GM12878 (cell line): ENCODE measurements at regions of chr15 and their contacts with region 1.

Region 1: DNA sequence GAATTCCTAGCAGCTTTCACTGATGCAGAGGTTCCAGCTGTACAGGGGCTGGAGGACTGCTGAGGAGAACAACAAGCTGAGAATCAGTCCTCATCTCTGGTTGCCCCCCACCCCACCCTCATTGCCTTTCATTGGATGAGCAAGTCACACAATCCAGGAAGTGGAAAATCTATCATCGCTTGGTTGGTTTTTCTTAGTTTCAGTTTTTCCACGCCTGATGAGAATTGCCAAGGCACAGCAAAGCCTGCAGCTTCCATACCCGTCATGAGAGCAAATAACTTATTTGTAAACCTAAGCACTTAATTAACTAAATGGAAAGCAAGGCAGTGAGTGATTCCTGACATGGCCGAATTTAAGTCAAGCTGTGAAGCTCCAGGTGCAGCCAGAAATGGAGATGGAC is 21.4 kb upstream of the LIPC start:
- DNase-seq: peak; percentile 27
- ATAC-seq: peak; percentile 80
- H3K4me3 ChIP-seq: peak overlapping the region; percentile 33; the same call in 1 of the 2 replicates
- H3K27ac ChIP-seq: peak overlapping the region; percentile 30
- H3K4me1 ChIP-seq: peaks cover 6% of the 10 kb centered on the region
- H3K27me3 ChIP-seq: no peaks in the 10 kb centered on the region
- CTCF ChIP-seq: no peak
- EP300 ChIP-seq: no peak
- POLR2A ChIP-seq: no peak
- RAD21 ChIP-seq: no peak

Region 2: DNA sequence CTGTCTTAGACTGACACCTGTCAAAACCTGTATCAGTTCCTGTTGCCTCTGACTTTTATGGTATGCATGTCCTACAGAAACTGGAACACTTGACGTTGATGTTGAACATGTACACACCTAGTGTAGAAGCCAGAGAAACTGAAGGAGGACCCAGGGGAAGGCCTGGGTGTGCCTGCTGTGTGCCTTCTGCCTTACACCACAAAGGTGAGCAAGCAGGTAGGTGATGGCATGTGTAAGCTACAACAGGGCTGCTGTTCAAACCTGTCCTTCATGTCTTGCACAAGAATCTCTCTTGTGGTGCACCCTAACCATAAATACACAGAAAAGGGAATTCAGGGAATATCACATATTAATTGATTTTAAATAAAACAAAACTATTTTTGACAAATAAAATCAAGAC is 285.8 kb before region 1 on chr15:
- CTCF ChIA-PET with region 1: no interaction called
- POLR2A ChIA-PET with region 1: no interaction called
- RAD21 ChIA-PET with region 1: no interaction called
- SMC1A ChIA-PET with region 1: no interaction called
- in situ Hi-C with region 1: no loop called
- intact Hi-C with region 1: no loop called
- DNase-seq: no peak
- ATAC-seq: no peak
- H3K4me3 ChIP-seq: no peak overlapping the region
- H3K27ac ChIP-seq: no peak overlapping the region
- H3K4me1 ChIP-seq: no peaks in the 10 kb centered on the region
- H3K27me3 ChIP-seq: no peaks in the 10 kb centered on the region
- CTCF ChIP-seq: no peak
- EP300 ChIP-seq: no peak
- POLR2A ChIP-seq: no peak
- RAD21 ChIP-seq: no peak

Region 3: DNA sequence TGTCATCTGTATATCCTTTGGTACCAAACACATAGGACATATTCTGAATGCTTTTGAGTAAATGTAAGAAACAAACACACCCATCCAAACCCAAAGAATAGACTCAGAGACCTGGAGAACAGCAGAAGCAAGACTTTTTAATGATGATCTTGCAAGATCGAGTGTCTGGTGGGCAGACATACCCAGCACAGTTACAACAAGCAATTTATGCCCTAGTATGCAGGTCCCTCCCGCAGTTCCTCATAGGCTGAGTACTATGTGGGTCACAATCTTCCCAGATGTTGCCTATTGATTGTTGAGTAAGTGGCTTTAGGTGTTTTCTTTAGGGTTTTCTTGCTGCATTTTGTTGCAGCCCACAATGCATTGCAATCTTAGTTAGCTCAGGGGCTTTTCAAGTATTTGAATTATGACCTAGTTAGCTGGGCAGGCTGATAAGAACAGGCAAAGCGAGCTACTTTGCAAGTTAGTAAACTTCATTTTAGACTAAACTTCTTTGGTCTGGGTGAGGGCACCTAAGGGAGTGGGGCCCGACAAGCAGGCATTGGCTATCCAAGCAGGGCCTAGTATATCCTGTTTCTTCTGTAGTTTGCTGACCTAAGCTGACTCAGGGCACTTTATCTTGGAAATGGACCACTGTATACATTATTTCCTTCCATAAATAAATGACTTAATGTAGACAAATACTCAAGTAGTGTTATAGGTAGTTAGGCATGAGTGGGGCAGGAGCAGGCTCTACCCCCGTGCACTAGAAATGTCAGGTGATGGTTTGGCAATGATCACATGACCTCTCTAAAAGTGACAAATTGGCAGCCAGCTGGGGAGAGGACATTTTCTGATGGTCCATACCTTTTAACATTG is 65.9 kb before region 1 on chr15:
- CTCF ChIA-PET with region 1: no interaction called
- POLR2A ChIA-PET with region 1: no interaction called
- RAD21 ChIA-PET with region 1: no interaction called
- SMC1A ChIA-PET with region 1: no interaction called
- in situ Hi-C with region 1: no loop called
- intact Hi-C with region 1: no loop called
- DNase-seq: no peak
- ATAC-seq: no peak
- H3K4me3 ChIP-seq: no peak overlapping the region
- H3K27ac ChIP-seq: no peak overlapping the region
- H3K4me1 ChIP-seq: no peaks in the 10 kb centered on the region
- H3K27me3 ChIP-seq: no peaks in the 10 kb centered on the region
- CTCF ChIP-seq: no peak
- EP300 ChIP-seq: no peak
- POLR2A ChIP-seq: no peak
- RAD21 ChIP-seq: no peak

Region 4: GRCh38 chr15:58380280-58380945 is 29.9 kb before region 1 on chr15:
- CTCF ChIA-PET with region 1: no interaction called
- POLR2A ChIA-PET with region 1: no interaction called
- RAD21 ChIA-PET with region 1: no interaction called
- SMC1A ChIA-PET with region 1: no interaction called
- in situ Hi-C with region 1: no loop called
- intact Hi-C with region 1: no loop called
- DNase-seq: no peak
- ATAC-seq: no peak
- H3K4me3 ChIP-seq: no peak overlapping the region
- H3K27ac ChIP-seq: no peak overlapping the region
- H3K4me1 ChIP-seq: no peaks in the 10 kb centered on the region
- H3K27me3 ChIP-seq: no peaks in the 10 kb centered on the region
- CTCF ChIP-seq: no peak
- EP300 ChIP-seq: no peak
- POLR2A ChIP-seq: no peak
- RAD21 ChIP-seq: no peak

Region 5: DNA sequence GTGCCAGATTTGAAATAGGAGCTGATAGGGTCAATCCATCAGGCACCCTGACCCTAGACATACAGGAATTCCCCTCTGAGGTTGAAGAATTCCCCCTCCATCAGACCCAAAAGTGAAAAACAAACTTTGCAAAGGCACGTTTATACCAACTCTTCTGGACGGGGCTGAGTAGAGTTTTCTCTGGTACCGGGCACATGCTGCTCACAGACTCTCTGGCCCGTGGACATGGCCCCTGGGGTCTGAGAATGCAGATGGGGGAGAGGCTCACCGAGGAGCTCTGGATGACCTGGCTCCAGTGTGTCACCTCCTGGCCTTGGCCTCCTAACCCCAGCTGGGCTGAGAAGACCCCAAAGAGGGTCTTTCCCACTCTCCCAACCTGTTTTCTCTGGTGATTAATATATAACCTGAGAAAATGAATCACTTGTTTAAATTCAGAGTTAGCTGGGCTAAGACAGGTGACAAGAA is 10.3 kb after region 1 on chr15:
- CTCF ChIA-PET with region 1: interaction called, 14 read pairs
- POLR2A ChIA-PET with region 1: interaction called, 10 read pairs
- RAD21 ChIA-PET with region 1: interaction called, 16 read pairs
- SMC1A ChIA-PET with region 1: interaction called, 17 read pairs
- in situ Hi-C with region 1: no loop called
- intact Hi-C with region 1: no loop called
- DNase-seq: peak; percentile 28
- ATAC-seq: peak; percentile 87
- H3K4me3 ChIP-seq: peak overlapping the region; percentile 30; the same call in 1 of the 2 replicates
- H3K27ac ChIP-seq: peak overlapping the region; percentile 71
- H3K4me1 ChIP-seq: peaks cover 12% of the 10 kb centered on the region
- H3K27me3 ChIP-seq: no peaks in the 10 kb centered on the region
- CTCF ChIP-seq: no peak
- EP300 ChIP-seq: no peak
- POLR2A ChIP-seq: no peak
- RAD21 ChIP-seq: no peak